CD4-positive, alpha-beta memory T cell (primary cell): ENCODE measurements at regions of chr9 and their contacts with region 1.

Region 1: GRCh38 chr9:12735665-12736064 is 39.2 kb upstream of the LURAP1L start:
- DNase-seq: no peak
- H3K4me3 ChIP-seq: no peak overlapping the region
- H3K4me3 Mint-ChIP-seq: no peak overlapping the region
- H3K27ac ChIP-seq: no peak overlapping the region
- H3K27ac Mint-ChIP-seq: no peak overlapping the region
- H3K4me1 ChIP-seq: no peaks in the 10 kb centered on the region
- H3K4me1 Mint-ChIP-seq: no peaks in the 10 kb centered on the region
- H3K27me3 ChIP-seq: no peaks in the 10 kb centered on the region
- H3K27me3 Mint-ChIP-seq: no peaks in the 10 kb centered on the region

Region 2: GRCh38 chr9:12748016-12748415 is 12.4 kb after region 1 on chr9:
- CTCF ChIA-PET with region 1: no interaction called
- POLR2A ChIA-PET with region 1: no interaction called
- intact Hi-C with region 1: loop called (anchors 2 kb)
- DNase-seq: no peak
- H3K4me3 ChIP-seq: no peak overlapping the region
- H3K4me3 Mint-ChIP-seq: no peak overlapping the region
- H3K27ac ChIP-seq: no peak overlapping the region
- H3K27ac Mint-ChIP-seq: no peak overlapping the region
- H3K4me1 ChIP-seq: no peaks in the 10 kb centered on the region
- H3K4me1 Mint-ChIP-seq: no peaks in the 10 kb centered on the region
- H3K27me3 ChIP-seq: no peaks in the 10 kb centered on the region
- H3K27me3 Mint-ChIP-seq: no peaks in the 10 kb centered on the region

Region 3: GRCh38 chr9:13070612-13071595 is 335.2 kb after region 1 on chr9:
- CTCF ChIA-PET with region 1: no interaction called
- POLR2A ChIA-PET with region 1: no interaction called
- intact Hi-C with region 1: no loop called
- DNase-seq: no peak
- H3K4me3 ChIP-seq: no peak overlapping the region
- H3K4me3 Mint-ChIP-seq: no peak overlapping the region
- H3K27ac ChIP-seq: no peak overlapping the region
- H3K27ac Mint-ChIP-seq: no peak overlapping the region
- H3K4me1 ChIP-seq: no peaks in the 10 kb centered on the region
- H3K4me1 Mint-ChIP-seq: no peaks in the 10 kb centered on the region
- H3K27me3 ChIP-seq: no peaks in the 10 kb centered on the region
- H3K27me3 Mint-ChIP-seq: no peaks in the 10 kb centered on the region